Activated CD8-positive, alpha-beta T cell treated with anti-CD3 and anti-CD28 coated beads for 36 hours (primary cell): ENCODE measurements at regions of chr11 and their contacts with region 1.

Region 1: DNA sequence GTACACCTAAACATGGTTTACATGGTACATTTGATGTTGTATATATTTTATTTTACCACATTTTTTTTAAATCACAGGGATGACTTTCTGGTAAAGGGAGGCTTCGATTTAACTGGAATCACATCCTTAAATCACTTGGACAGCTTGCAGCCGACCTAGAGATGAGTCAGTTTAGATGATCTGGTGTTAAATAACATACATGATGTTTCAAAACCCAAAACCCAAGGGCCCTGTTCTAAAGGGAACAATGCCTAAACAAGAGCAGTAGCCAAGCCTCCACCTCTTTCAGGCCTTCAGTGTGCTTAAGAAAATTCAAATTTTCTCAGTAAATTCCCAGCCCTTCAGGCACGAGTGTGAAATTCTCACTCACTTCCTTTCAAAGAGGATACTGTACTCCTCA is 108.8 kb downstream of the WT1 start:
- DNase-seq: no peak
- ATAC-seq: no peak
- H3K4me3 Mint-ChIP-seq: no peak overlapping the region
- H3K27ac Mint-ChIP-seq: no peak overlapping the region
- H3K4me1 Mint-ChIP-seq: no peaks in the 10 kb centered on the region
- H3K27me3 Mint-ChIP-seq: peaks cover 12% of the 10 kb centered on the region
- CTCF ChIP-seq: no peak

Region 2: DNA sequence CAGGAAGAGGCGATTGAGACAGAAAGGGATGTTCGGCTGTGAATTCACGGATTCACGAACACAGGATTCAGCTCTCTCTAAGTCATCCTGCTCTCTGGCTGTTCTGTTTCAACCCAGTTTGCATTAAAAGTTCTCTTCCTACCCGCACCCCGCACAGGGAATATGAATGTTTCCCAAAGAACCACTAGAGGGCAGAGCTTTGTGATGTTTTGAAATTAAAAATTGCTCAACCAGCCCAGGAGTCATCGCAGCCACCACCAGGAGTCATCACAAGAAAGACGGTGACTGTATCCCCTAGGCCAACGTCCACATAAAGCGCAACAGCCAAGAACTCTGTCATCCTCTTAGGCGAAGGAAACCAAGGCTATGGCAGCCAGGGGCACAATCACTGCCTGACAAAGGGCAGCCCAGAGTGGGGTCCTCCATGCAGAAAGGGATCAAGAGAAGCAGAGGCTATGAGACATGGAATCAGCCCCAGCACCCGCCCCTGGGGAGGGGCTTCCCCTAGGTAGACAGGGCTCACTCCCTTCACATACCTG is 13.6 kb before region 1 on chr11:
- CTCF ChIA-PET with region 1: interaction called, 14 read pairs
- POLR2A ChIA-PET with region 1: no interaction called
- intact Hi-C with region 1: no loop called
- DNase-seq: peak; percentile 57
- ATAC-seq: peak; percentile 85
- H3K4me3 Mint-ChIP-seq: no peak overlapping the region
- H3K27ac Mint-ChIP-seq: no peak overlapping the region
- H3K4me1 Mint-ChIP-seq: peaks cover 7% of the 10 kb centered on the region
- H3K27me3 Mint-ChIP-seq: peaks cover 8% of the 10 kb centered on the region
- CTCF ChIP-seq: peak; percentile 39

Region 3: GRCh38 chr11:32343325-32344008 is 16.9 kb after region 1 on chr11:
- CTCF ChIA-PET with region 1: interaction called, 10 read pairs
- POLR2A ChIA-PET with region 1: no interaction called
- intact Hi-C with region 1: no loop called
- DNase-seq: no peak
- ATAC-seq: peak; percentile 71
- H3K4me3 Mint-ChIP-seq: no peak overlapping the region
- H3K27ac Mint-ChIP-seq: no peak overlapping the region
- H3K4me1 Mint-ChIP-seq: peaks cover 8% of the 10 kb centered on the region
- H3K27me3 Mint-ChIP-seq: peaks cover 3% of the 10 kb centered on the region
- CTCF ChIP-seq: no peak

Region 4: GRCh38 chr11:32420937-32421901 is 94.7 kb after region 1 on chr11:
- CTCF ChIA-PET with region 1: interaction called, 4 read pairs
- POLR2A ChIA-PET with region 1: no interaction called
- intact Hi-C with region 1: loop called (anchors 10 kb)
- DNase-seq: peak; percentile 57
- ATAC-seq: peak; percentile 84
- H3K4me3 Mint-ChIP-seq: no peak overlapping the region
- H3K27ac Mint-ChIP-seq: no peak overlapping the region
- H3K4me1 Mint-ChIP-seq: peaks cover 10% of the 10 kb centered on the region
- H3K27me3 Mint-ChIP-seq: peaks cover 30% of the 10 kb centered on the region
- CTCF ChIP-seq: no peak

Region 5: GRCh38 chr11:32792948-32793475 is 466.5 kb after region 1 on chr11:
- CTCF ChIA-PET with region 1: interaction called, 7 read pairs
- POLR2A ChIA-PET with region 1: no interaction called
- intact Hi-C with region 1: loop called (anchors 2 kb)
- DNase-seq: peak; percentile 83
- ATAC-seq: peak; percentile 74
- H3K4me3 Mint-ChIP-seq: no peak overlapping the region
- H3K27ac Mint-ChIP-seq: no peak overlapping the region
- H3K4me1 Mint-ChIP-seq: peaks cover 9% of the 10 kb centered on the region
- H3K27me3 Mint-ChIP-seq: peaks cover 8% of the 10 kb centered on the region
- CTCF ChIP-seq: peak; percentile 96